ENCODE measurements at regions of chr18 and their contacts with region 1.

Region 1: GRCh38 chr18:45212181-45213039 is 402.9 kb upstream of the SLC14A2 start:
- H3K4me3 ChIP-seq: no peak overlapping the region
- H3K27ac ChIP-seq: no peak overlapping the region
- H3K4me1 ChIP-seq: no peaks in the 10 kb centered on the region
- CTCF ChIP-seq: peak; percentile 88

Region 2: DNA sequence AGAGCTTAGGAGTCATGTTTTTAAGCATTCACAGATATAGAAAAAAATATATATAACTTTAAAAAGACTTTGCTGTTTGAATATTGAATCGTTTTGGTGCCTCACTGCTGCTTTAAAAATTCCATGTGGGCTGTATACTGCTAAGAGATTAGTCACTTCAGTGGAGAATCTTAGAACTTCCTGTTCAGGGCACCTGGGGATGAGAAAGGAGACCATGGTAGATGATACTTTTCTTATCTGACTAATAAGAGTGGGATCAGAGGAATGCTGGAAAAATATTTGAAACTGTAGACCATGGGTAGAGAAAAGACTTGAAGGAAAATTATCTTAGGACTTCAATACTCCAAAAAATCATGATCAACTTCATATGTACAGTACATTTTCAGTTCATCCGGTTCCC is 974.0 kb before region 1 on chr18:
- CTCF ChIA-PET with region 1: no interaction called
- POLR2A ChIA-PET with region 1: no interaction called
- H3K4me3 ChIP-seq: no peak overlapping the region
- H3K27ac ChIP-seq: no peak overlapping the region
- H3K4me1 ChIP-seq: no peaks in the 10 kb centered on the region
- CTCF ChIP-seq: no peak

Region 3: DNA sequence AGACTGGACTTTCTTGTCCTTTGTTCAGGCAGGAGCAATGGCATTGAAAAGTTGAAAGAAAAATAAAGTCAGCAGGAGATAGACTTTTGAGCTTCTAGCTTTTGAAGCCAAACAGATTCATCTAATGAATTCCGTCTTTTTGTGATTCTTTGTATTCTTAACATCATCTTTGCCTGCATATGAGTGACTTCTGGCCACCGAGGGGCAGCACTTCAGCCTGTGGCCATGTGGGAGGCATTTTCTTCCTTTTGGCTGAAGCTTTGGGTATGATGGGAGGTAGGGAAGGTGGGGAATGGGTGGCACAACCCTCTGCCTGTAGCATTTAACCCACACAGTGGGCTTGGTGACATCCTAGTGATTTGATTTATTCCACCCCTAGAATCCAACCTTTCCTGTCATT is 311.1 kb before region 1 on chr18:
- CTCF ChIA-PET with region 1: interaction called, 22 read pairs
- POLR2A ChIA-PET with region 1: no interaction called
- H3K4me3 ChIP-seq: no peak overlapping the region
- H3K27ac ChIP-seq: no peak overlapping the region
- H3K4me1 ChIP-seq: no peaks in the 10 kb centered on the region; the same call in 1 of the 2 replicates
- CTCF ChIP-seq: no peak

Region 4: GRCh38 chr18:44909191-44909719 is 303.2 kb before region 1 on chr18:
- CTCF ChIA-PET with region 1: interaction called, 13 read pairs
- POLR2A ChIA-PET with region 1: no interaction called
- H3K4me3 ChIP-seq: no peak overlapping the region
- H3K27ac ChIP-seq: no peak overlapping the region
- H3K4me1 ChIP-seq: peaks cover 4% of the 10 kb centered on the region; the same call in 1 of the 2 replicates
- CTCF ChIP-seq: no peak

Region 5: GRCh38 chr18:45197526-45197970 is 14.9 kb before region 1 on chr18:
- CTCF ChIA-PET with region 1: interaction called, 12 read pairs
- POLR2A ChIA-PET with region 1: no interaction called
- H3K4me3 ChIP-seq: no peak overlapping the region
- H3K27ac ChIP-seq: no peak overlapping the region
- H3K4me1 ChIP-seq: no peaks in the 10 kb centered on the region
- CTCF ChIP-seq: no peak

Region 6: GRCh38 chr18:45227001-45227742 is 14.8 kb after region 1 on chr18:
- CTCF ChIA-PET with region 1: interaction called, 31 read pairs
- POLR2A ChIA-PET with region 1: no interaction called
- H3K4me3 ChIP-seq: no peak overlapping the region
- H3K27ac ChIP-seq: no peak overlapping the region
- H3K4me1 ChIP-seq: no peaks in the 10 kb centered on the region
- CTCF ChIP-seq: no peak